Right ventricle myocardium inferior (tissue), 1 donor: ENCODE measurements at regions of chr3 and their contacts with region 1.

Region 1: GRCh38 chr3:23888617-23889228 is 28.1 kb downstream of the NKIRAS1 start:
- DNase-seq: no peak
- ATAC-seq: peak; percentile 27

Region 2: DNA sequence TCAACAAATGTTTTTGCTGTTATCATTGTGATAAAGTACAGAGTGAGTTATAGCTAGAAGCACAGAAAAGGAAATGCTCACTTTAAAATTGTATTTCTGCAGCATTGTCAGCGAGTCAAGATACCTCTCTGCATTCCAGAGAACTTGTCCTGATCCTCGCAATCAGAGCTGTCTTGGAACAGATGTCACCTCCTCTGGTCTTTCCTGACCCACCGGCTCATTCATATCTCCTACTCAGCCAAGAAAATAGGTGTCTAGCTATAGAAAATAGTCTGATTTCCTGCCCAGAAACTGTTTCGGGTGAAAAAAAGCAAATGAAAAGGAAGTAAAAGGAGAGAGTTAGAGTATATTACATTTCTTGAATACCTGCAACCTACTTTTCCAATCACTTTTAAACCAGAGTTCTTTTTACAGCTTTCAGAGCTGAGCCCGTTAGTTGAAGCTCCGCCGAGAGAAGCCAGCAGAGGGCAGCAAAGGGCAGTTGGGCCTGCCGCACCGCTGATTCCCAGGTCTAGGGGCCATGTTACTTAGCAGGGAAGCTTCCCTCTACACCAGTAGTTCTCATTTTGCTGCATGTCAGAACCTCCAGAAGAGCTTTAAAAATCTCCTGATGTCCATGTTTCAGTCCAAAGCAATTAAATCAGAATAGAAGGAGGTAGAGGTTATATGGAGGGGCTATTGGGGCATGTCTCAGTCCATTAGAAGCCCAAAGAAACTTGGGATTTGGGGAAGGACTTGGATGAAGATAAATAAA is 791.7 kb after region 1 on chr3:
- intact Hi-C with region 1: loop called (anchors 5 kb)
- DNase-seq: peak; percentile 73
- ATAC-seq: peak; percentile 52